Activated CD4-positive, alpha-beta memory T cell treated with anti-CD3 and anti-CD28 coated beads, Interleukin-2, amount 10 ng/mL, durations not matched to agents 7 days and 5 days (primary cell): ENCODE measurements at regions of chr1 and their contacts with region 1.

Region 1: GRCh38 chr1:184754476-184755225 is at the start of gene EDEM3:
- DNase-seq: peak; percentile 98
- H3K4me3 Mint-ChIP-seq: peak within 1 kb of the TSS; percentile 88
- H3K27ac Mint-ChIP-seq: peak within 1 kb of the TSS; percentile 77
- H3K4me1 Mint-ChIP-seq: peaks cover 51% of the 10 kb centered on the region
- H3K27me3 Mint-ChIP-seq: peaks cover 2% of the 10 kb centered on the region
- total RNA-seq, gene EDEM3: 39.3 to 42.9 TPM

Region 2: GRCh38 chr1:184743062-184743756 is 11.4 kb before region 1 on chr1:
- CTCF ChIA-PET with region 1: interaction called, 4 read pairs
- POLR2A ChIA-PET with region 1: interaction called, 126 read pairs
- DNase-seq: no peak
- H3K4me3 Mint-ChIP-seq: no peak overlapping the region
- H3K27ac Mint-ChIP-seq: peak overlapping the region; percentile 84
- H3K4me1 Mint-ChIP-seq: peaks cover 66% of the 10 kb centered on the region
- H3K27me3 Mint-ChIP-seq: no peaks in the 10 kb centered on the region

Region 3: GRCh38 chr1:184843732-184844495 is 89.3 kb after region 1 on chr1:
- CTCF ChIA-PET with region 1: no interaction called
- POLR2A ChIA-PET with region 1: interaction called, 11 read pairs
- DNase-seq: peak; percentile 83
- H3K4me3 Mint-ChIP-seq: no peak overlapping the region
- H3K27ac Mint-ChIP-seq: peak overlapping the region; percentile 62
- H3K4me1 Mint-ChIP-seq: peaks cover 49% of the 10 kb centered on the region
- H3K27me3 Mint-ChIP-seq: no peaks in the 10 kb centered on the region

Region 4: DNA sequence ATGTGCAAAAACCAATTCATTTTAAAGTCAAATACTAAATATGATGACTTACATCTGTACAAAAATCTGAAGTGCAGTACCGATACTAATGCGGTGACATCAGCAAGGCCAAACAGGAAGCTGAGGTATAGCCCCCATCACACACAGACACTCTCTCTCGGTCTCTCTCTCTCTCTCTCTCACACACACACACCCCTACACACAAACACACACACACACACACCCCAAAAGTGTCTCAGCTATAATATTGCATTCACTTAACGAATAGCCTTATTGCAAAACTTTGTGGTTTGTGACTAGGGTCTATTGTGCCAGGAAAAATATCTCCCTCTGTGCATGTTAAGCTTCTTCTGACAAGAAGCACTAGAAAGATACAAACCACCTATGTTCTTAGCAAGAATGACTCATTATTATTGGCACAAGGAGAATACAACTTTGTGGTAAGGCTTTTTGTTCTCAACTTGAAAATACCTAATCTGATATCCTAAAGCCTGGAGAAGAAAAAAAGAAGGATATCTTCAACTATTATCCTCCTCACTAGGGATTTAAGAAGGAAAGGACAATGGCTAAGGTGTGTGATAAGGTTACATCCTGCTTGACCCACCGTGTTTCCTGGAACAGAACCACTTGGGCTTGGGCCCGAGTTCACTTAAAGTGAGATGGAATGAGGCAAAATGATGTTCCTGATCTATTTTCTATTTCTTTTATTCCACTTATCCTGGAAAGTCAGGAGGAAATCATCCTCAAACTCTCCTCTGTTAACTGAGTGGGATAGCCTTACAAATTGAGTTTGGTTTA is 112.5 kb after region 1 on chr1:
- CTCF ChIA-PET with region 1: no interaction called
- POLR2A ChIA-PET with region 1: interaction called, 15 read pairs
- DNase-seq: peak; percentile 76
- H3K4me3 Mint-ChIP-seq: peak overlapping the region; percentile 16
- H3K27ac Mint-ChIP-seq: peak overlapping the region; percentile 85
- H3K4me1 Mint-ChIP-seq: peaks cover 66% of the 10 kb centered on the region
- H3K27me3 Mint-ChIP-seq: no peaks in the 10 kb centered on the region

Region 5: DNA sequence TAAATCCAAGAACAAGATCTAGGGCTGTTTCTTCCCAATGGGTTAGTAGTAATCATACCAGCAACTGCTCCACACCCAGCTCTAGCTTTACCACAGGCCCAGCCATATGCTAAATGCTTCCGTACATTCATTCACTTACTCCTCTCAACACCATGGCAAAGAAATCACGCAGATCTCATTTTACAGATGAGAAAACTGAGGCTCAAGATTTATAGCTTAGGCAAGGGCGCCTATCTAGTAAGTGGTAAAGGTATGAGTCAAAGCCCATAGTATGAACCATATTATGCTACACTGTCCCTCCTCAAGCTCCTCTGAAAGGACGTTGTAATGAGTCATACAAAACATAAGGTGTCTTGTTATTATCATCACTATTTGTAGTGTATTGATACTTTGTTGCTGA is 137.5 kb after region 1 on chr1:
- CTCF ChIA-PET with region 1: no interaction called
- POLR2A ChIA-PET with region 1: interaction called, 13 read pairs
- DNase-seq: peak; percentile 42
- H3K4me3 Mint-ChIP-seq: peak overlapping the region; percentile 6
- H3K27ac Mint-ChIP-seq: peak overlapping the region; percentile 82
- H3K4me1 Mint-ChIP-seq: peaks cover 61% of the 10 kb centered on the region
- H3K27me3 Mint-ChIP-seq: no peaks in the 10 kb centered on the region